AG04449 (cell line): ENCODE measurements at regions of chr19 and their contacts with region 1.

Region 1: DNA sequence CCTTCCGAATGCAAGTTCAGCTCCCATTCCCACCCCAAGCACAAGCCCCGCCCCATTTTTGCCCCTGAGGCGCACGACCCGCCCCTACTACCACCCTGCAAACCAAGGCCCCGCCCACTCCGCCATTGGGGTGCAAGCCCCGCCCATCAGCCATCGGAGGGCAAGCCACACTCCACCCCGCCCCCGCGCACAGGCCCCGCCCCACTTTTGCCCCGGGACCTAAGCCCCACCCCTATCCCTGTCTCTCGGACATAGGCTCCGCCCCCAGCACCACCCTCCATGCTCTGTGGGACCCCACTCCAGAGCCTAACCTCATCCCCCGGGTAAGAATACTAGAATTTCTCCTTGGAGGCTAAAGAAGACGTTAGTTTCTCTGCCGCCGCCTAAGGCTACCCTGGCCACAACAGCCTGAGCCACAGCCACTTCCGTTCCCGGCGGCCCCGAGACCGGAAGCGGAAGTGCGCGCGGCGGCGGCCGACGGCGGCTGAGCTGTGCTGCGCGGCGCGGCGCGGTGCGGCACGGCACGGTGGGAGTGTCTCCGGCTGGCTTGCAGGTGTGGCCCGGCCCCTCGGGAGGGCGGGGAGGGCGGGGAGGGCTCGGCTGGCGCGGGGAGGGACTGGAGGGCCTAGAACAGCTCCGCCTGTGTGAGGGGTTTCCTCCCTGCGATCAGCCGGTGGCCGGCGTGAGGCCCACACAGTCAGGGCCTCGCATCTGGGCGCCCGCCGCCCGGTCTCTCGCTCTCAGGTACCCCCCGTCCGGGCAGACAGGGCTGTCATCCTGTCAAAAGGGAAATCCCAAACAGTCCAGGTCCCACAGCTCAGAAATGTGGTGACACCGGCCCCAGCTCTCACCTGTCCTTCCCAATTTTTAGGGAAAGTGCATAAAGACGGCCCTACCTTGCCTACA is at the start of gene ZNF333:
- DNase-seq: peak; percentile 40
- H3K4me3 ChIP-seq: peak within 1 kb of the TSS; percentile 84
- CTCF ChIP-seq: no peak

Region 2: GRCh38 chr19:14519860-14520407 is 169.9 kb before region 1 on chr19:
- CTCF ChIA-PET with region 1: no interaction called
- POLR2A ChIA-PET with region 1: no interaction called
- DNase-seq: no peak
- H3K4me3 ChIP-seq: no peak overlapping the region
- CTCF ChIP-seq: no peak

Region 3: GRCh38 chr19:14614099-14614412 is 75.8 kb before region 1 on chr19:
- CTCF ChIA-PET with region 1: no interaction called
- POLR2A ChIA-PET with region 1: no interaction called
- DNase-seq: no peak
- H3K4me3 ChIP-seq: no peak overlapping the region
- CTCF ChIP-seq: no peak

Region 4: GRCh38 chr19:14632279-14632678 is 57.6 kb before region 1 on chr19:
- CTCF ChIA-PET with region 1: no interaction called
- POLR2A ChIA-PET with region 1: no interaction called
- DNase-seq: no peak
- H3K4me3 ChIP-seq: no peak overlapping the region
- CTCF ChIP-seq: no peak

Region 5: DNA sequence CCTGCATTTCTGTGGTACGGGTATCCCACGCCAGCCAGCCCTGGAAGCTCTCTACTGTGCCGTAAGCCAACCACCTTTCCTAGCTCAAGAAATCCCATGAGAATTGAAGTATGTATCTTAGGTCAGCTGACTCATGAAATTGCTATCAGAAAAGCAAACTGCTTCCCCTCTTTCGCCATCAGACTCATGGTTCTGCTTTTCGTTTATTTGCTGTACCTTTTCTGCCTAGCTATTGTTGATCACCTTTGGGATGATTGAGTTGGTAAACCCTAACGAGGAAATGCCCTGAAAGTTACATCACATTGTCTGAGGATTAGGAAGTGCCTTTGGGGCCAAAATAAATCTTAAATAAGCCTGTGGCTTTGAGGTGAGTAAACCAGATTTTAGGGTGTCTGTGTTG is 15.1 kb before region 1 on chr19 and contains the start of gene ADGRE3:
- CTCF ChIA-PET with region 1: interaction called, 32 read pairs
- POLR2A ChIA-PET with region 1: no interaction called
- DNase-seq: no peak
- H3K4me3 ChIP-seq: no peak within 1 kb of the TSS
- CTCF ChIP-seq: no peak

Region 6: DNA sequence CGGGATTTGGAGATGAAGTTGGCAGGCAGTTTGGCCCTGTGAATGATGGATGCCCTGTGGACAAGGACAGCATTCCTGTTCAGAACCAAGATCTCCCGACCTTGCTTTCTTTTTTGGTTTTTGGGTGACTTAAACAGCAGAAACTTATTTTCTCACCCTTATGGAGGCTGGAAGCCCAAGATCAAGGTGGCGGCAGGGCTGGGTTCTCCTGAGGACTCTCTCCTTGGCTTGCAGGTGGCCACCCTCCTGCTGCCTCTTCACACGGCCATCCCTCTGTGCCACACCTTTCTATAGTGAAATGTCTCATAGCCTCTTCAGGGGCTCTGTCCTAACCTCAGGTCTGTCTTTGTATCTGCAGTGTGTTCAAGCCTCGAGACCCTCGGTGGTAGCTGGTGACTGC is 14.0 kb after region 1 on chr19:
- CTCF ChIA-PET with region 1: no interaction called
- POLR2A ChIA-PET with region 1: no interaction called
- DNase-seq: no peak
- H3K4me3 ChIP-seq: no peak overlapping the region
- CTCF ChIP-seq: no peak